ENCODE measurements at regions of chr7 and their contacts with region 1.

Region 1: DNA sequence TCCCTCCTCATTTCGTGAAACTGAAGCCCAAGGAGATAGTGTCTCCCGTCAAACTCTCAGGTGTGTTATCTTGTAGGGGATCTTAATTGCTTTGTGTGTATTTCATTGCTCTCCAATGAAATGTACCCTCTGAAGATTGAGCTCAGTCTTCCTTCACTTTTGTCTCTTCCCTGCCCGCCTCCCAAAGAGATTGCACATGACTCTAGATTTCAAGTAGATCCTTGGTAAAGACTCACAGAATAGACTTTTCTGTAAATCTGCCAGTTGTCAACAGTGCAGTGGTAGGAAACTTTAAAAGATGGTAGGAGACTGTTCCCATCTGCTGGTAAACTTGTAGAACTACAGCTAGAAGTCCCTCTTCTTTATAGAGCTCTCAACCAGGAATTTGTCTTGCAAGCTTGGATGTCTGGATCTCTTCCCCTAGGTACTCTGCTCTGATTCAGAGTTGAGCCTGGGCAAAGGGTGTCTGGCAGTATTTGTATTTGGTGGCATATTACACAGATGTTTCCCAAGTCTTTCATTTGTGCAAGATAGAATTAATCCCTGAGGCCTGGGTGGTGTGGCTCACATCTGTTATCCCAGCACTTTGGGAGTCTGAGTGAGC is 9.6 kb downstream of the CCL26 start:
- DNase-seq: no peak
- H3K4me3 ChIP-seq: no peak overlapping the region
- H3K27ac ChIP-seq: no peak overlapping the region
- H3K4me1 ChIP-seq: no peaks in the 10 kb centered on the region
- H3K27me3 ChIP-seq: no peaks in the 10 kb centered on the region
- CTCF ChIP-seq: peak in 2 of 3 experiments; percentile 64 to 78; a peak in 3 of 4 replicates
- EP300 ChIP-seq: no peak
- POLR2A ChIP-seq: no peak
- RAD21 ChIP-seq: peak; percentile 87 to 92

Region 2: GRCh38 chr7:75624134-75624832 is 138.1 kb before region 1 on chr7:
- CTCF ChIA-PET with region 1: interaction called, 14 read pairs
- POLR2A ChIA-PET with region 1: no interaction called
- DNase-seq: no peak
- H3K4me3 ChIP-seq: no peak overlapping the region
- H3K27ac ChIP-seq: no peak overlapping the region
- H3K4me1 ChIP-seq: peaks cover 0 to 10% (median 5%) of the 10 kb centered on the region in 4 experiments; a peak in 5 of 7 replicates
- H3K27me3 ChIP-seq: no peaks in the 10 kb centered on the region
- CTCF ChIP-seq: no peak
- EP300 ChIP-seq: no peak
- POLR2A ChIP-seq: no peak
- RAD21 ChIP-seq: no peak

Region 3: DNA sequence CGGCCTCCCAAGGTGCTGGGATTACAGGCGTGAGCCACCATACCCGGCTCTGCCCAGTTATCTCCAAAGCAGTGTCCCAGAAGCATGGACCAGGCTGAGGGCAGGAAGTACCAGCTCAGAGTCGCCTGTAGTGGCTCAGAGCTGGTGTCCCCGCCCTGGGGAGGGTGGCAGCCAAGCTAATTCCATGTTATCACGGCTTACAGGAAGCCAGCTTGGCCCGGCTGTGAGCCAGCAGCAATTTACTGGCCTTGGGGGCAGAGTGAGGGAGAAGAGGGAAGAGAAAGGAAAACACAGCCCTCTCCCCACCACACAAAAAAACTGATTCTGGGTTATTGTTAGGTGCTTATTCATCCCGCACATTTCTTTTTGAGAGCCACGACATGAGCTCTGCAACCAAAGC is 111.7 kb before region 1 on chr7:
- CTCF ChIA-PET with region 1: interaction called, 13 read pairs
- POLR2A ChIA-PET with region 1: no interaction called
- DNase-seq: no peak
- H3K4me3 ChIP-seq: no peak overlapping the region
- H3K27ac ChIP-seq: no peak overlapping the region
- H3K4me1 ChIP-seq: peaks cover 0 to 13% (median 3%) of the 10 kb centered on the region in 4 experiments; a peak in 4 of 7 replicates
- H3K27me3 ChIP-seq: no peaks in the 10 kb centered on the region
- CTCF ChIP-seq: no peak
- EP300 ChIP-seq: no peak
- POLR2A ChIP-seq: no peak
- RAD21 ChIP-seq: no peak

Measured in H1 (cell line).